Dorsolateral prefrontal cortex (tissue), 120 donors: ENCODE measurements at regions of chr20 and their contacts with region 1.

Region 1: GRCh38 chr20:34704177-34705007 is at the start of gene TP53INP2:
- DNase-seq: peak; percentile 90 to 95 (median 94)
- H3K4me3 ChIP-seq: peak within 1 kb of the TSS; percentile 47 to 98 (median 86)
- H3K27ac ChIP-seq: peak within 1 kb of the TSS; percentile 80 to 100 (median 98)
- H3K27me3 ChIP-seq: no peaks in the 10 kb centered on the region
- CTCF ChIP-seq: peak in 9 of 56 donors; percentile 2 to 32 (median 15)
- total RNA-seq, gene TP53INP2: 27.3 to 337 (median 106) TPM

Region 2: GRCh38 chr20:34312544-34313217 is 391.7 kb before region 1 on chr20:
- intact Hi-C with region 1: loop called (anchors 5 to 10 kb)
- DNase-seq: peak; percentile 72 to 92 (median 88)
- H3K4me3 ChIP-seq: peak overlapping the region in 58 of 59 donors; percentile 13 to 69 (median 47)
- H3K27ac ChIP-seq: peak overlapping the region in 41 of 59 donors; percentile 31 to 88 (median 71)
- H3K27me3 ChIP-seq: no peaks in the 10 kb centered on the region
- CTCF ChIP-seq: peak; percentile 85 to 100 (median 100)

Region 3: GRCh38 chr20:34579191-34579978 is 125.0 kb before region 1 on chr20:
- intact Hi-C with region 1: loop called (anchors 2 kb)
- DNase-seq: peak; percentile 78 to 92 (median 88)
- H3K4me3 ChIP-seq: peak overlapping the region in 13 of 59 donors; percentile 1 to 36 (median 10)
- H3K27ac ChIP-seq: peak overlapping the region in 57 of 59 donors; percentile 39 to 97 (median 90)
- H3K27me3 ChIP-seq: no peaks in the 10 kb centered on the region
- CTCF ChIP-seq: peak; percentile 17 to 88 (median 73)

Region 4: GRCh38 chr20:34637245-34638038 is 67.0 kb before region 1 on chr20:
- intact Hi-C with region 1: loop called in 1 of 2 experiments (anchors 5 kb)
- DNase-seq: peak in 6 of 10 donors; percentile 51 to 81 (median 61)
- H3K4me3 ChIP-seq: peak overlapping the region in 4 of 59 donors; percentile 8 to 19 (median 12)
- H3K27ac ChIP-seq: peak overlapping the region; percentile 81 to 99 (median 95)
- H3K27me3 ChIP-seq: no peaks in the 10 kb centered on the region
- CTCF ChIP-seq: peak in 4 of 56 donors; percentile 8 to 25 (median 16)

Region 5: DNA sequence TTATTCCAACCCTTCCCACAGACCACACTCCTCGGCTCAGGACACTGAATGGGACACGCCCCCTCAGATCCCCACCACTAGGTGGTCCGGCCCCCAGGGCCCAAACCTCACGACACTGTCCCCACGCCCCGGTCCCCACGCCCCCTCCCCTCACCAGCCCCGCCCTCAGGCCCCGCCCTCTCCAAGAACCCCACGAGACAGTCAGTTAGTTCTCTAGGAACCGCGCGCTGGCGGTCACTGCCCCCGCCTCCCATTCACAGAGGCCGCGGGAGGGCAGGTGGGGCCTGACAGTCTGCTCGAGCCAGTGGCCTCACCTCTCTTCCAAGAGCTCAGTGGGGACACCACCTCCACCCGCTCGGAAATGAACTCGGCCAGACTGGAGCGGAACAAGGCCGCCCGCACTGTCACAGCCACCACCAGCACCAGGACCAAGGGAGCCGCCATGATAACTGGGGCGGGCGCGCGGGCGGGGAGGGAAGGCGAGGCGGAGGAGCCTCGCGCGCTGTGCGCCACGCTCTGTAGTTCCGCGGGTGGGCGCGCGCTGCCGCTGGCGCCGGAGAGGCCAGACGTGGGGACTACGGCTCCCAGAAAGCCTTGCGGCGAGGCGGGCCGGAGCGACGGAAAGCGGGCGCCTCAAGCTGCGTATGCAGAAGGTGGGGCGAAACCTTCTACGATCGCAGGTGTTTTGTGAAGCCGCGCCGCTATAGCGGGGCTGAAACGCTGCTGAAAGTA is 27.6 kb before region 1 on chr20 and contains the start of gene PIGU:
- intact Hi-C with region 1: loop called (anchors 1 to 2 kb)
- DNase-seq: peak; percentile 93 to 98 (median 96)
- H3K4me3 ChIP-seq: peak within 1 kb of the TSS; percentile 33 to 91 (median 75)
- H3K27ac ChIP-seq: peak within 1 kb of the TSS in 58 of 59 donors; percentile 35 to 93 (median 84)
- H3K27me3 ChIP-seq: no peaks in the 10 kb centered on the region
- CTCF ChIP-seq: peak in 54 of 56 donors; percentile 22 to 75 (median 52)
- total RNA-seq, gene PIGU: 15.5 to 38.4 (median 22.8) TPM

Region 6: GRCh38 chr20:34724172-34724571 is 19.8 kb after region 1 on chr20:
- intact Hi-C with region 1: no loop called
- DNase-seq: no peak
- H3K4me3 ChIP-seq: no peak overlapping the region
- H3K27ac ChIP-seq: no peak overlapping the region
- H3K27me3 ChIP-seq: no peaks in the 10 kb centered on the region
- CTCF ChIP-seq: no peak

Region 7: DNA sequence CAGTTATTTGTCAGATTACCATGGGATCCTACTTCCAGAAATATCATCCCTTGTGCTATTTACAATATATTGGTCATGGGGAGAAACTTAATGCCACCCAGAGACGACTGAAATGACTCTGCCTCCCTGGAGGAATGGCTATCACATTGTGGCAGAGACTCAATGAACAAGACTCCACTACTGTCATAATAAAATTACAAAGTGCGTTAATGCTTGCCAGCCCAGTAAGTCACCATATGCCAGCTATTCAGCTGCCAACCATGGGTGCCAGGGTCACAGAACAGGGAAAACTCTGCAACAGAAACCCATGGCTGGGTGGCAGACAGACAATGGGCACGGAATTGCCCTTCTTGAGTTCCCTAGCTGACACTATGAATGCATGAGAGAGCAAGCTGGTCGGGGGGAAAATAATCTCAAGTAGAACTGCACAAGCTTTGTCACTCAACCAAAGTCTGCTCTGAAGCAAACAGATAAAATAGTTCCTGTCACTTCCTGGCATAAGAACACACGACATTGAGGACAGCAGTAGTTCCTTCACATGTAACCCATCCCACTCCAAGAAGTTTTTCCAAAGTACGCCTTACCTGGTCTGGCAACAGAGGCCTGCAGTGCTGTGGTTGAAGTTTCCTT is 31.8 kb after region 1 on chr20:
- intact Hi-C with region 1: no loop called
- DNase-seq: peak in 1 of 10 donors; percentile 66
- H3K4me3 ChIP-seq: no peak overlapping the region
- H3K27ac ChIP-seq: peak overlapping the region in 2 of 59 donors; percentile 6 to 14
- H3K27me3 ChIP-seq: no peaks in the 10 kb centered on the region
- CTCF ChIP-seq: no peak

Region 8: GRCh38 chr20:34768096-34768495 is 63.7 kb after region 1 on chr20:
- intact Hi-C with region 1: loop called in 1 of 2 experiments (anchors 5 kb)
- DNase-seq: no peak
- H3K4me3 ChIP-seq: no peak overlapping the region
- H3K27ac ChIP-seq: peak overlapping the region in 5 of 59 donors; percentile 8 to 74 (median 48)
- H3K27me3 ChIP-seq: no peaks in the 10 kb centered on the region
- CTCF ChIP-seq: no peak

Region 9: DNA sequence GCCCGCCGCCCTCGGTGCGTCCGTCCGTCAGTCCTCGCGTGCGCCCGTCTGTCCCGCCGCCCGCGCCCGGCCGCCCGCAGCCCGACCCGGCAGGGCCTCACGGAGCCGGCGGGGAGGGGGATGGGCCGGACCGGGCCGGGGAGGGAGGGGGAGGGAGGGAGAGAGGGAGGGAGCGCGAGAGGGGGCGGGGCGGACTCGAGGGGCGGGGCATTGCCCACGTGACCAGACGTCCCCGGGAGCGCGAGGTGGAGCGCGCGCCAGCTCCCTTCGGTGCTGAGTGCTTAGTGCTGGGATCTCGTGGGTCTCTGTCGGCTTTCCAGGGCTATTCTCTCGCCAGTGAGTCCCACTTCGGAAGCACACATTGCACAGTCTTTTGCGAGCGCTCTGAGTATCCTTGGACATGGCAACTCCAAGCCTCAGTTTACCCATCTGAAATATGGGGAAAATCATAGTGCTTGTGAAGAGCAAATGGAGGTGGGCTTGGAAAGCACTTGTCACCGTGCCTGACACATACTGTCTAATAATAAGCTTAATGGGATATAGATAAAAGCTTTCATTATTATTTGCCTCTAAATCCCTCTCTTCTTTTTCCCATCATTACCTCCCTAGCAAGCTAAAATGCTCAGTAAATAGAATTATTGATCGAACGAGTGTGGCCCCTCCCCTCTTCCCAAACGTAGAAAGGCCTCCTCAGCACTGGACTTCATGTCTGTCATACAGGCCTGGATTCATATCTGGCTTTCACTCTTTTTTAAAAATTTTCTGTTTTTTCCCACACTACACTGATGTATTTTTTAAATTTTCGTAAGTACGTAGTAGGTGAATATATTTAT is 121.4 kb after region 1 on chr20 and contains the start of gene NCOA6:
- intact Hi-C with region 1: loop called (anchors 10 kb)
- DNase-seq: peak; percentile 81 to 92 (median 86)
- H3K4me3 ChIP-seq: peak within 1 kb of the TSS; percentile 65 to 93 (median 83)
- H3K27ac ChIP-seq: peak within 1 kb of the TSS; percentile 71 to 98 (median 91)
- H3K27me3 ChIP-seq: no peaks in the 10 kb centered on the region
- CTCF ChIP-seq: peak in 14 of 56 donors; percentile 11 to 40 (median 18)
- total RNA-seq, gene NCOA6: 29.3 to 53.5 (median 39.1) TPM